ENCODE measurements at regions of chr2 and their contacts with region 1.

Region 1: GRCh38 chr2:235447210-235447609 is 46.6 kb upstream of the AGAP1 start:
- DNase-seq: no peak

Region 2: DNA sequence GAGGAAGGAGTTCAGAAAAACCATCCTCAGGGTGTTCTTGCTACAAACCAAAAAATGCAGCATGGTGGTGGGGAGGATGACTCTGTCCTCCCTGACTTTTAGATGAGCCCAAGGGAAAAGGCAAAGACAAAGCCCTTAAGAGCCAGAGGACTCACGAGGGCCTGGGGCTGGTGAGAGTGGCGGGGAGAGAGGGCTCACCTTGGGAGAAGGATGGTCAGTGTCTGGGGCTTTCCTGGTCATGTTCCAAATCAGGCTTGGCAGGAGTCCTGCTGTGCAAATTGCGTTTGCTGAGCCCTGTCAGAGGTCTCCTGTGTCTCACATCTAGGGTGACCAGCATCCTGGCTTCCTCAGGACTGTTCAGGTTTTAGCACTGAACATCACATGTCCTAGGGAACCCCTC is 1682.4 kb before region 1 on chr2:
- intact Hi-C with region 1: loop called in 1 of 2 experiments (anchors 5 kb)
- DNase-seq: no peak

Region 3: GRCh38 chr2:235416864-235417499 is 30.2 kb before region 1 on chr2:
- intact Hi-C with region 1: no loop called
- DNase-seq: no peak

Region 4: DNA sequence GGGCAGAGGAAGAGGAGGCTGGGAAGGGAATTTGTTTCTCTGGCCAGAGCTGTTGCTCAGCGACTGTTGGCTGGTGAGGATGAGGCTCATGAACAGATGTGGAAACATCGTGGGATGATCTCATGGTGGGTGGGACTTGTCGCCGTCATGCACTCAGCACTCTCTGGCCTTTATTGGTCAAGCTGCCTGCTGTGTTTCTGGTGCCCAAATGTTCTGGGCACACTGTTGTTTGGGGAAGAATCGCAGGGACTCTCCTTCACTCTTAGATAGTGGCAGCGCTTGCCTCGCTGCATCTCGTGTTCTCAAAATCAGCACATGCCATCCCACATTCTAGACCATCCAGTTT is 192.2 kb after region 1 on chr2:
- intact Hi-C with region 1: no loop called
- DNase-seq: peak; percentile 93

Measured in posterior vena cava (tissue), 2 donors.